ENCODE measurements at regions of chrX and their contacts with region 1.

Region 1: GRCh38 chrX:130108647-130109428 is 1.5 kb downstream of the ELF4 start:
- DNase-seq: peak; percentile 81
- H3K4me3 Mint-ChIP-seq: peak overlapping the region; percentile 93
- H3K27ac Mint-ChIP-seq: peak overlapping the region; percentile 92
- H3K4me1 Mint-ChIP-seq: peaks cover 25% of the 10 kb centered on the region
- H3K27me3 Mint-ChIP-seq: no peaks in the 10 kb centered on the region

Region 2: GRCh38 chrX:129987871-129988270 is 121.0 kb before region 1 on chrX:
- intact Hi-C with region 1: no loop called
- DNase-seq: no peak
- H3K4me3 Mint-ChIP-seq: no peak overlapping the region
- H3K27ac Mint-ChIP-seq: no peak overlapping the region
- H3K4me1 Mint-ChIP-seq: peaks cover 7% of the 10 kb centered on the region
- H3K27me3 Mint-ChIP-seq: peaks cover 13% of the 10 kb centered on the region

Region 3: DNA sequence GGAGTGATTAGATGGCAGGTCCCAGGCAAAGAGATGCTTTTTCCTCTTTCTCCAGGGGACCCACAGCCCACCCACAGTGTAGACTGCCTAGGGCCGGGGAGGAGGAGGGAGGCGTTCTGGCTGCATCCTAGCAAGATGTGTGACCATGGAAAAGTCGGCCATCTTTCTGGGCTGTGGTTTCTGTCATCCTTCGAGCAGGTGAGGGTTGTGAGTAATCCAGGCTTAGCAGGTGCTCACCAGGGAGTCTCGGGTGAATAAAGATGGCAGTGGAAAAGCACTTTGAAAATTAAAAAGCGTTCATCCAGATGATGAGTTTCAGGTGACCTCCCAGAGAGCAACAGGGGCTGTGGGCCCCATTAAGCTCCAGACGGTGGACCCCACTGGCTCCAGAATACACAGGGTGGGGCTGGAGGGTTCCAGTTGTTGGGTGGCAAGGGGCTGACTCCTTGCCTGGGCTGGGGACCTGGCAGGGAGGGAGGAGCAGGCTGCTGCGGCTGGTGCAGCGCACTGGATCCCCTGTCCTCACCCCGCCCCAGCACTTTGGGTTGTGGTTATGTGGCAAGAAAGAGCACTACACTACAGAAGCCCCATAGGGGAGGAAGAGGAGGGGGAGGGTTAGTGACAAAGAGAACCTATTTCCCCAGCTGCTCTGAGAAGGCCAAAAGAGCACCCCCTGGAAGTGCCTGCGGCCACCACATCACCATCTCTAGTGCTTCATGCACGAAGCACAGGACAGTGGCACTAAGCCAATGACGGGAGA is 22.2 kb before region 1 on chrX:
- intact Hi-C with region 1: loop called (anchors 1 kb)
- DNase-seq: peak; percentile 91
- H3K4me3 Mint-ChIP-seq: peak overlapping the region; percentile 86
- H3K27ac Mint-ChIP-seq: peak overlapping the region; percentile 93
- H3K4me1 Mint-ChIP-seq: peaks cover 51% of the 10 kb centered on the region
- H3K27me3 Mint-ChIP-seq: no peaks in the 10 kb centered on the region

Region 4: DNA sequence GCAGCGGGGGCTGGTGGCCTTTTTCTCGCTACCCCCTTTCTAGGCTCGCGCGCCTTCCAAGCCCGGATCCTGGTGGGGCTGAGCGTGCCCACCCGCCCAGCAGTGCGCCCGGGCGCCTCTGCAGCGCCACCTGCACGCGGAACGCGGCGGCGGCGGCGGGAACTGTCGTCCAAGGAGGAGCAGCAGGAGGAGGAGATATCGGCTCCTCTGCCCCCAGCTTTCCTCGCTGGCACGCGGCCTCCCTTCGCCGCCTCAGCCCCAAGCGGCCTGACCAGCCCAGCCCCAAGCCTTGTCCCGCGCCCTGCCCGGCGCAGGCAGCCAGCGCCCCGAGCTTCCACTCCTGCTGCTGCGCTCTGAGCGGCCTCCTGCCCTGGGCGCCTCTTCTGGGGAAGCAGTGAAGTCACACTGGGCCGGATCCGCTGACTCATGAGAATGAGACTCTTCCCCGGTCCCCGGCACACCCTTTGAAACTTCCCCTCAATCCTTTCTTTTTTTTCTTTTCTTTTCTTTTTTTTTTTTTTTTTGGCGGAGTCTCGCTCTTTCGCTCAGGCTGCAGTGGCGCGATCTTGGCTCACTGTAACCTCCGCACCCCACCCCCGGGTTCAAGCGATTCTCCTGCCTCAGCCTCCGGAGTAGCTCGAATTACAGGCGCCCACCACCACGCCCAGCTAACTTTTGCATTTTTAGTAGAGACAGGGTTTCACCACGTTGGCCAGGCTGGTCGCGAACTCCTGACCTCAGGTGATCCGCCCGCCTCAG is 12.1 kb after region 1 on chrX:
- intact Hi-C with region 1: loop called (anchors 1 kb)
- DNase-seq: peak; percentile 90
- H3K4me3 Mint-ChIP-seq: peak overlapping the region; percentile 72
- H3K27ac Mint-ChIP-seq: peak overlapping the region; percentile 57
- H3K4me1 Mint-ChIP-seq: peaks cover 17% of the 10 kb centered on the region
- H3K27me3 Mint-ChIP-seq: no peaks in the 10 kb centered on the region

Measured in activated CD4-positive, alpha-beta T cell treated with anti-CD3 and anti-CD28 coated beads, Interleukin-2, amount 10 ng/mL, durations not matched to agents 24 days and 14 days (primary cell).